ENCODE measurements at regions of chr1 and their contacts with region 1.

Region 1: GRCh38 chr1:27662707-27663393 is 9.1 kb downstream of the IFI6 start:
- DNase-seq: peak; percentile 54
- ATAC-seq: peak; percentile 59
- H3K4me3 ChIP-seq: no peak overlapping the region
- H3K27ac ChIP-seq: peak overlapping the region; percentile 43
- H3K4me1 ChIP-seq: peaks cover 35 to 58% of the 10 kb centered on the region in 2 experiments
- H3K27me3 ChIP-seq: no peaks in the 10 kb centered on the region
- CTCF ChIP-seq: peak; percentile 81 to 96 (median 89)
- POLR2A ChIP-seq: no peak
- RAD21 ChIP-seq: peak; percentile 95

Region 2: GRCh38 chr1:27300341-27301051 is 362.4 kb before region 1 on chr1:
- CTCF ChIA-PET with region 1: interaction called, 10 read pairs
- POLR2A ChIA-PET with region 1: interaction called, 3 read pairs
- RAD21 ChIA-PET with region 1: no interaction called
- intact Hi-C with region 1: no loop called
- DNase-seq: peak; percentile 69
- ATAC-seq: peak; percentile 94
- H3K4me3 ChIP-seq: no peak overlapping the region
- H3K27ac ChIP-seq: no peak overlapping the region
- H3K4me1 ChIP-seq: peaks cover 0 to 7% of the 10 kb centered on the region in 2 experiments; a peak in 2 of 4 replicates
- H3K27me3 ChIP-seq: no peaks in the 10 kb centered on the region
- CTCF ChIP-seq: peak; percentile 91 to 93 (median 93)
- POLR2A ChIP-seq: no peak
- RAD21 ChIP-seq: peak; percentile 99

Region 3: GRCh38 chr1:27392096-27392777 is 270.6 kb before region 1 on chr1 and contains the start of gene GPR3:
- CTCF ChIA-PET with region 1: interaction called, 4 read pairs
- POLR2A ChIA-PET with region 1: no interaction called
- RAD21 ChIA-PET with region 1: no interaction called
- intact Hi-C with region 1: loop called (anchors 5 kb)
- DNase-seq: peak; percentile 84
- ATAC-seq: peak; percentile 81
- H3K4me3 ChIP-seq: peak within 1 kb of the TSS; percentile 96 to 99
- H3K27ac ChIP-seq: peak within 1 kb of the TSS; percentile 88
- H3K4me1 ChIP-seq: peaks cover 17 to 43% of the 10 kb centered on the region in 2 experiments
- H3K27me3 ChIP-seq: no peaks in the 10 kb centered on the region
- CTCF ChIP-seq: peak; percentile 42 to 70 (median 43); a peak in 5 of 6 replicates
- POLR2A ChIP-seq: no peak
- RAD21 ChIP-seq: peak; percentile 49
- total RNA-seq, gene GPR3: 2.8 TPM

Region 4: DNA sequence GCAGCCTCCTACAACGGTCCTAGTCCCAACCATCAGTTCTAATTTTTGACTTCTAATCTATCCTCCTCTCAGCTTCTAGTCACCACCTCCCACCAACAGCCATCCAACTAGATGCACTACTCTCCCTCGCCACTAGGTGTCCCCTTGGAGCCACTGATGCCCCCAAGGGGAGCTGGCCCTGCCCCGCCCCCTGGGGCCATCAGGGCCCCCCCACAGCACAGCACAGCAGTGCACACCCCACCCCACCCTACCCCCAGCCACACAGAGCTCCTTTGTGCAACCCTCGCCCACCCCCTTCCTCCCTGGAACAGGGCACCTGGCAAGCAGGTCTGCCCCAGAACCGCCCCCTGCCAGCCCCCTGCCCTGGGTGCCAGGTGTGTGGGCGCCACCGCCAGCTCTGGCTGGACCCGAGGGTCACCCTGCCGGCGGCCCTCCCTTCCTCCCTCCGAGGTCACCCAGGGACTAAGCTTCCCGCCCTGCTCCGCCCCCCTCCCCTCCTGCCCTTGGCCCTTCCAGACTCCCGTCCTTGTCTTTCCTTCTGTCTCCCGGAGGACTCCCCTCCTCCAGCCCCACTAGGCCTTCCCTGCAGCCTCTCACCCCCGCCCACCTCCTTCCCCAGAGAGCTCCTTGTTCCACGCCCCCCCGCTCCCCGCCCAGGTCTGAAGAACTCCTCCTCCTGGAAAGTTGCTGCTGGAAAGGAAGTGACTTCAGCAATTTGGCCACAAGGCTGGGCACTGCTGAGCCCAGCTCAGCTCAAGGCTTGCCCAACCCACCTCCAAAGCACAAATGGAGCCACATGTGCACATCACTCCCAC is 105.9 kb before region 1 on chr1:
- CTCF ChIA-PET with region 1: interaction called, 10 read pairs
- POLR2A ChIA-PET with region 1: no interaction called
- RAD21 ChIA-PET with region 1: interaction called in 1 of 2 experiments, 3 read pairs
- intact Hi-C with region 1: no loop called
- DNase-seq: peak; percentile 77
- ATAC-seq: peak; percentile 85
- H3K4me3 ChIP-seq: peak overlapping the region; percentile 26 to 30
- H3K27ac ChIP-seq: peak overlapping the region; percentile 87
- H3K4me1 ChIP-seq: peaks cover 23 to 48% of the 10 kb centered on the region in 2 experiments
- H3K27me3 ChIP-seq: no peaks in the 10 kb centered on the region
- CTCF ChIP-seq: peak in 2 of 3 experiments; percentile 86 to 90; a peak in 5 of 6 replicates
- POLR2A ChIP-seq: no peak
- RAD21 ChIP-seq: peak; percentile 86

Region 5: GRCh38 chr1:27616441-27616840 is 46.4 kb before region 1 on chr1:
- CTCF ChIA-PET with region 1: interaction called, 74 read pairs
- POLR2A ChIA-PET with region 1: interaction called, 4 read pairs
- RAD21 ChIA-PET with region 1: no interaction called
- intact Hi-C with region 1: no loop called
- DNase-seq: no peak
- ATAC-seq: peak; percentile 46; the same call in 1 of the 2 replicates
- H3K4me3 ChIP-seq: no peak overlapping the region
- H3K27ac ChIP-seq: no peak overlapping the region; the same call in 1 of the 2 replicates
- H3K4me1 ChIP-seq: peaks cover 0 to 3% of the 10 kb centered on the region in 2 experiments; a peak in 2 of 4 replicates
- H3K27me3 ChIP-seq: no peaks in the 10 kb centered on the region
- CTCF ChIP-seq: peak in 2 of 3 experiments; percentile 23 to 43; a peak in 4 of 6 replicates
- POLR2A ChIP-seq: no peak
- RAD21 ChIP-seq: no peak